ENCODE measurements at regions of chr7 and their contacts with region 1.

Region 1: DNA sequence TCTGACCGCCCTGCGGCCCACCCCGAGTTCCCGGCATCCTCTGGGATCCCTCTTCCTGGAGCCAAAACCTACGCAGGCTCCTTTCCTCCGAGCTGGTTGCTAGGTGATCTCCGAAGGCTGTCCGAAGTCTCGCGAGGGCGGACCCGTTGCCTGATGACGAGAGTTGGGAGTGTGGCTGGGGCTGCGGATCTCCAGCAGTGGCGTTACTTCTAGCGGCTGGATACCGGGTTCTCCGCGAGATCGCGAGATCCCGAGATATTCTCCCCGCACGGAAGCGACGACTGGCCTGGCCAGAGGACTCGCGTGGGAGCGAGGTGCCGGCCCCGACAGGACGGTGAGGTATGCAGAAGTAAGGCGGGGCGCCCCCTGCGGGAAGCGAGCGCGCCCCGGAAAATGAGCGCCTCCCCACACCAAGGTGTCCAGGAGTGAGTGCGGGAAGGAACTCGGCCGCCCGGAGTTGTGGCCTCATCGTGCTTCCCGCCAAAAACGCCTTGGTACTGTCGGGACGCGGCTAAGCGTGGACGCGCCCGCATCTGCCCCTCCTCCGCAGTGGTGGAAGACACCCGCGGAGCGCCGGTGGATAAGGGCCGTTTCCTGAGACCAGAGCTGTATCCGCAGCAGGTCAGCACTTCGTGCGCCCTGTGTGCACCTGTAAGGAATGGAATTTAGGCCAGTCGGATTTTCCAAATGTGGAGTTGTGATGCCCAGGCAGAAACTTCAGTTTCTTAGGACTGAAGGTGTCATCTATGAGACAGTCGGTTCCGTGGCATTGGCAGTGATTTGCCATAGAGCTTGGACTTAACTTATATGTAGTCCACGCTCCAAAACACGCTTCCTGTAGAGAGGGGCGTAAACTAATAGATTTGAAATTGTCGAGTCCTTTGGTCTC is at the start of gene AGBL3:
- DNase-seq: peak; percentile 95
- ATAC-seq: peak; percentile 86
- H3K4me3 ChIP-seq: peak within 1 kb of the TSS; percentile 69 to 97 (median 94)
- H3K4me3 Mint-ChIP-seq: peak within 1 kb of the TSS; percentile 98
- H3K27ac ChIP-seq: peak within 1 kb of the TSS; percentile 88 to 93
- H3K27ac Mint-ChIP-seq: peak within 1 kb of the TSS; percentile 98
- H3K4me1 ChIP-seq: peaks cover 4 to 5% of the 10 kb centered on the region in 2 donors
- H3K4me1 Mint-ChIP-seq: peaks cover 34% of the 10 kb centered on the region
- H3K27me3 ChIP-seq: no peaks in the 10 kb centered on the region
- H3K27me3 Mint-ChIP-seq: no peaks in the 10 kb centered on the region
- CTCF ChIP-seq: peak; percentile 92
- total RNA-seq, gene AGBL3: 10.9 and 11.1 TPM in 2 replicates

Region 2: GRCh38 chr7:134730411-134730829 is 256.2 kb before region 1 on chr7:
- CTCF ChIA-PET with region 1: no interaction called
- POLR2A ChIA-PET with region 1: no interaction called
- intact Hi-C with region 1: no loop called
- DNase-seq: no peak
- ATAC-seq: no peak
- H3K4me3 ChIP-seq: no peak overlapping the region
- H3K4me3 Mint-ChIP-seq: no peak overlapping the region
- H3K27ac ChIP-seq: no peak overlapping the region
- H3K27ac Mint-ChIP-seq: no peak overlapping the region
- H3K4me1 ChIP-seq: no peaks in the 10 kb centered on the region
- H3K4me1 Mint-ChIP-seq: no peaks in the 10 kb centered on the region
- H3K27me3 ChIP-seq: peaks cover 0 to 3% (median 0%) of the 10 kb centered on the region in 4 experiments
- H3K27me3 Mint-ChIP-seq: peaks cover 14% of the 10 kb centered on the region
- CTCF ChIP-seq: no peak

Region 3: GRCh38 chr7:135160098-135160857 is 173.7 kb after region 1 on chr7:
- CTCF ChIA-PET with region 1: interaction called, 80 read pairs
- POLR2A ChIA-PET with region 1: interaction called, 5 read pairs
- intact Hi-C with region 1: no loop called
- DNase-seq: no peak
- ATAC-seq: peak; percentile 25
- H3K4me3 ChIP-seq: no peak overlapping the region
- H3K4me3 Mint-ChIP-seq: peak overlapping the region; percentile 78
- H3K27ac ChIP-seq: peak overlapping the region in 1 of 2 donors; percentile 59
- H3K27ac Mint-ChIP-seq: peak overlapping the region; percentile 92
- H3K4me1 ChIP-seq: peaks cover 26 to 32% of the 10 kb centered on the region in 2 donors
- H3K4me1 Mint-ChIP-seq: peaks cover 50% of the 10 kb centered on the region
- H3K27me3 ChIP-seq: no peaks in the 10 kb centered on the region
- H3K27me3 Mint-ChIP-seq: no peaks in the 10 kb centered on the region
- CTCF ChIP-seq: no peak

Region 4: DNA sequence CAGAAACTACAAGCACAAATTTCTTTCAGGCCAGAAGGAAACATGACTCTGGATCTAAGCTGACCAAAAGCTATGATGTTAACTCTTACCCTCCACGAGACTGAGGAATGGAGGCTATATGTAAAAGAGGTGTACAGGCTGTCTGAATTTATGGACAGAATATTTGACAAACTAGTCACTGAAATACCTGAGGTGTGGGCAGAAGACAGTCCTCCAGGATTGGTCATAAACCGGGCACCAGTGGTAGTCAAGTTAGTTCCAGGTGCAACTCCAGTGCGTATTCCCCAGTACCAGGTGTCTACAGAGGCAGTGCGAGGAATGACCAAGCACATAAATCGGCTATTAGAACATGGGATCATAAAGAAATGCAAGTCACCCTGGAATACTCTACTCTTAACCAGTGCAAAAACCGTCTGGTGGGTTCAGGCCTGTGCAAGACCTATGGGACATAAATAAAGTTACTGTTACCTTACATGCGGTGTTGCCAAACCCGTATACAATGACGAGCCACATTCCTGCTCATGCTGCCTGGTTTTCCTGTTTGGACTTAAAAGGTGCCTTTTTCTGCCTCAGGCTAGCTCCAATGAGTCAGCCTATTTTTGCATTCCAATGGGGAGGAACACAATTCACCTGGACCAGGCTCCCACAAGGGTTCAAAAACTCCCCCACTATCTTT is 190.6 kb after region 1 on chr7:
- CTCF ChIA-PET with region 1: interaction called, 80 read pairs
- POLR2A ChIA-PET with region 1: no interaction called
- intact Hi-C with region 1: no loop called
- DNase-seq: no peak
- ATAC-seq: no peak
- H3K4me3 ChIP-seq: no peak overlapping the region
- H3K4me3 Mint-ChIP-seq: no peak overlapping the region
- H3K27ac ChIP-seq: no peak overlapping the region
- H3K27ac Mint-ChIP-seq: no peak overlapping the region
- H3K4me1 ChIP-seq: peaks cover 0 to 4% of the 10 kb centered on the region in 2 donors
- H3K4me1 Mint-ChIP-seq: peaks cover 5% of the 10 kb centered on the region
- H3K27me3 ChIP-seq: no peaks in the 10 kb centered on the region
- H3K27me3 Mint-ChIP-seq: no peaks in the 10 kb centered on the region
- CTCF ChIP-seq: no peak

Region 5: GRCh38 chr7:135197906-135198655 is 211.5 kb after region 1 on chr7:
- CTCF ChIA-PET with region 1: no interaction called
- POLR2A ChIA-PET with region 1: no interaction called
- intact Hi-C with region 1: no loop called
- DNase-seq: no peak
- ATAC-seq: no peak
- H3K4me3 ChIP-seq: no peak overlapping the region
- H3K4me3 Mint-ChIP-seq: no peak overlapping the region
- H3K27ac ChIP-seq: no peak overlapping the region
- H3K27ac Mint-ChIP-seq: no peak overlapping the region
- H3K4me1 ChIP-seq: no peaks in the 10 kb centered on the region
- H3K4me1 Mint-ChIP-seq: no peaks in the 10 kb centered on the region
- H3K27me3 ChIP-seq: no peaks in the 10 kb centered on the region
- H3K27me3 Mint-ChIP-seq: no peaks in the 10 kb centered on the region
- CTCF ChIP-seq: no peak

Region 6: GRCh38 chr7:135392701-135393100 is 406.1 kb after region 1 on chr7:
- CTCF ChIA-PET with region 1: no interaction called
- POLR2A ChIA-PET with region 1: no interaction called
- intact Hi-C with region 1: no loop called
- DNase-seq: no peak
- ATAC-seq: no peak
- H3K4me3 ChIP-seq: no peak overlapping the region
- H3K4me3 Mint-ChIP-seq: no peak overlapping the region
- H3K27ac ChIP-seq: no peak overlapping the region
- H3K27ac Mint-ChIP-seq: no peak overlapping the region
- H3K4me1 ChIP-seq: peaks cover 0 to 14% of the 10 kb centered on the region in 2 donors
- H3K4me1 Mint-ChIP-seq: peaks cover 19% of the 10 kb centered on the region
- H3K27me3 ChIP-seq: no peaks in the 10 kb centered on the region
- H3K27me3 Mint-ChIP-seq: no peaks in the 10 kb centered on the region
- CTCF ChIP-seq: no peak

Region 7: GRCh38 chr7:136056651-136057231 is 1070.1 kb after region 1 on chr7:
- CTCF ChIA-PET with region 1: no interaction called
- POLR2A ChIA-PET with region 1: no interaction called
- intact Hi-C with region 1: no loop called
- DNase-seq: no peak
- ATAC-seq: no peak
- H3K4me3 ChIP-seq: no peak overlapping the region
- H3K4me3 Mint-ChIP-seq: no peak overlapping the region
- H3K27ac ChIP-seq: no peak overlapping the region
- H3K27ac Mint-ChIP-seq: no peak overlapping the region
- H3K4me1 ChIP-seq: no peaks in the 10 kb centered on the region
- H3K4me1 Mint-ChIP-seq: no peaks in the 10 kb centered on the region
- H3K27me3 ChIP-seq: no peaks in the 10 kb centered on the region
- H3K27me3 Mint-ChIP-seq: no peaks in the 10 kb centered on the region
- CTCF ChIP-seq: no peak